ENCODE measurements at regions of chrX and their contacts with region 1.

Region 1: GRCh38 chrX:13087322-13088155 is 43.1 kb upstream of the FAM9C start:
- DNase-seq: peak in 8 of 9 donors; percentile 54 to 94 (median 88)
- ATAC-seq: peak; percentile 77
- H3K4me3 ChIP-seq: peak overlapping the region; percentile 70
- H3K4me3 Mint-ChIP-seq: peak overlapping the region; percentile 72 to 89 (median 82)
- H3K27ac ChIP-seq: peak overlapping the region; percentile 88
- H3K27ac Mint-ChIP-seq: peak overlapping the region; percentile 94 to 99 (median 98)
- H3K4me1 ChIP-seq: peaks cover 79 to 81% of the 10 kb centered on the region in 2 donors
- H3K4me1 Mint-ChIP-seq: peaks cover 15 to 99% (median 86%) of the 10 kb centered on the region in 7 donors
- H3K27me3 ChIP-seq: no peaks in the 10 kb centered on the region
- H3K27me3 Mint-ChIP-seq: no peaks in the 10 kb centered on the region

Region 2: DNA sequence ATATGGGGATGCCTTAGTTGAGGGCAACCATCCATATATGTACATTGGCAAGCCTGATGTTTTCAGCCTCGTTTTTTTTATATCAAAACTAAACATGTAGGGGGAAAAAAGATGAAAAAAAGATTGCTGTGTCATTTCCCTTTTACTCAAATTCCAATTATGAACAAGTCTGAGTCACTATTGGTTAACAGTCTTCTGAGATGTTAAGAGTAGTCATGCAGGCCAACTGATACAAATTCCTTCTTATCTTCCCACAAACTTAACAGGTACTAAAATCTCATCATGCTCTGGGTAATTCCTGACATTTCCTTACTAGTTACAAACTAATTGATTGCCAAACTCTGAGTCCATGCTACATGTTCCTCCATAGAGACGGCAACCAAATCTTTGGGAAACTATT is 727.2 kb before region 1 on chrX:
- CTCF ChIA-PET with region 1: no interaction called
- POLR2A ChIA-PET with region 1: no interaction called
- intact Hi-C with region 1: no loop called
- DNase-seq: no peak
- ATAC-seq: no peak
- H3K4me3 ChIP-seq: no peak overlapping the region
- H3K4me3 Mint-ChIP-seq: no peak overlapping the region
- H3K27ac ChIP-seq: no peak overlapping the region
- H3K27ac Mint-ChIP-seq: no peak overlapping the region
- H3K4me1 ChIP-seq: no peaks in the 10 kb centered on the region
- H3K4me1 Mint-ChIP-seq: no peaks in the 10 kb centered on the region
- H3K27me3 ChIP-seq: no peaks in the 10 kb centered on the region
- H3K27me3 Mint-ChIP-seq: no peaks in the 10 kb centered on the region

Region 3: GRCh38 chrX:12967711-12968465 is 119.7 kb before region 1 on chrX:
- CTCF ChIA-PET with region 1: interaction called, 26 read pairs
- POLR2A ChIA-PET with region 1: interaction called, 1,322 read pairs
- intact Hi-C with region 1: loop called in 1 of 2 experiments (anchors 1 kb)
- DNase-seq: no peak
- ATAC-seq: peak; percentile 48
- H3K4me3 ChIP-seq: peak overlapping the region; percentile 56
- H3K4me3 Mint-ChIP-seq: peak overlapping the region; percentile 74 to 92 (median 82)
- H3K27ac ChIP-seq: peak overlapping the region; percentile 65
- H3K27ac Mint-ChIP-seq: peak overlapping the region; percentile 92 to 99 (median 97)
- H3K4me1 ChIP-seq: peaks cover 32 to 41% of the 10 kb centered on the region in 2 donors
- H3K4me1 Mint-ChIP-seq: peaks cover 19 to 60% (median 45%) of the 10 kb centered on the region in 7 donors
- H3K27me3 ChIP-seq: no peaks in the 10 kb centered on the region
- H3K27me3 Mint-ChIP-seq: no peaks in the 10 kb centered on the region

Region 4: DNA sequence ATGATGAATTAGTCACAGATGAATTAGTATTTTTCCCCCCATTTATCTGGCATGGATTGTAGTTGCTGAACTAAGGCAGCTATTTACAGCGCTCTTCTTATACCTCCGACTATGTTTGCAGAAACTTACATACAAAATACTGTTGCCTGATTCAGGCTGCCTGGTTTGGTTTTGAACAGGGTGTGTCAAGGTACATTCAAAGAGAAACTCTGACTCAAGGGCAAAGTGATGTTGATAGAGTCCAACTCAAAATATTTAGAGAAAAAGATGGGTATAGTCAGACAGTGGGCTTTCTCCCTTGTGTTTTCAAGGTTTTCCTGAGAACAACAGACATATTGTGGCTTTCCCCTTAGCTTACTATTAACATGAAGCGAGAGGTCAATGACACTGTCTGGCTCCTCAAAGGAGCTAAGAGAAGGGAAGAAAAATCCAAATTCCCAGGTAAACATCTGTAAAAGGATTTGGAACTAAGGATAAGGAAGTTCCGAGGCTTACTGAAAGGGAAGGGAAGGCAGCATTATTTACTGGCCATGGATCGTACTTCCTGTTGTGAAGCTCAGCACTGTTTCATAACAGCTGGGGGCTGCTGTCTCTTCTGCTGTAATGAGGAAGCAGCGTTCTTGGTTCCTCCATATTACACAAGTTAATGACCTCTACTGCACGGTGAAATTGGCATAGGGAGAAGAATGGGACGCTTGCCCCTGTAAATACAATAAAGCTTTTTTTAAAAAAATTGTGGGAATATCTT is 74.0 kb before region 1 on chrX:
- CTCF ChIA-PET with region 1: interaction called, 3 read pairs
- POLR2A ChIA-PET with region 1: interaction called, 434 read pairs
- intact Hi-C with region 1: no loop called
- DNase-seq: peak in 5 of 9 donors; percentile 16 to 45 (median 34)
- ATAC-seq: peak; percentile 85
- H3K4me3 ChIP-seq: peak overlapping the region; percentile 31
- H3K4me3 Mint-ChIP-seq: peak overlapping the region; percentile 20 to 75 (median 58)
- H3K27ac ChIP-seq: peak overlapping the region; percentile 65
- H3K27ac Mint-ChIP-seq: peak overlapping the region; percentile 80 to 92 (median 87)
- H3K4me1 ChIP-seq: peaks cover 6 to 44% of the 10 kb centered on the region in 2 donors
- H3K4me1 Mint-ChIP-seq: peaks cover 16 to 80% (median 68%) of the 10 kb centered on the region in 7 donors
- H3K27me3 ChIP-seq: no peaks in the 10 kb centered on the region
- H3K27me3 Mint-ChIP-seq: no peaks in the 10 kb centered on the region

Region 5: GRCh38 chrX:13064599-13065143 is 22.9 kb before region 1 on chrX:
- CTCF ChIA-PET with region 1: interaction called, 3 read pairs
- POLR2A ChIA-PET with region 1: interaction called, 11 read pairs
- intact Hi-C with region 1: no loop called
- DNase-seq: no peak
- ATAC-seq: no peak
- H3K4me3 ChIP-seq: no peak overlapping the region
- H3K4me3 Mint-ChIP-seq: peak overlapping the region in 1 of 10 donors; percentile 27
- H3K27ac ChIP-seq: no peak overlapping the region
- H3K27ac Mint-ChIP-seq: peak overlapping the region in 3 of 9 donors; percentile 53 to 55 (median 54)
- H3K4me1 ChIP-seq: peaks cover 0 to 12% of the 10 kb centered on the region in 2 donors
- H3K4me1 Mint-ChIP-seq: peaks cover 13 to 55% (median 43%) of the 10 kb centered on the region in 7 donors
- H3K27me3 ChIP-seq: no peaks in the 10 kb centered on the region
- H3K27me3 Mint-ChIP-seq: no peaks in the 10 kb centered on the region

Region 6: GRCh38 chrX:13341491-13342101 is 254.1 kb after region 1 on chrX:
- CTCF ChIA-PET with region 1: no interaction called
- POLR2A ChIA-PET with region 1: interaction called, 3 read pairs
- intact Hi-C with region 1: loop called in 1 of 2 experiments (anchors 5 kb)
- DNase-seq: peak in 1 of 9 donors; percentile 8
- ATAC-seq: no peak
- H3K4me3 ChIP-seq: no peak overlapping the region
- H3K4me3 Mint-ChIP-seq: no peak overlapping the region
- H3K27ac ChIP-seq: no peak overlapping the region
- H3K27ac Mint-ChIP-seq: no peak overlapping the region
- H3K4me1 ChIP-seq: no peaks in the 10 kb centered on the region
- H3K4me1 Mint-ChIP-seq: no peaks in the 10 kb centered on the region
- H3K27me3 ChIP-seq: no peaks in the 10 kb centered on the region
- H3K27me3 Mint-ChIP-seq: no peaks in the 10 kb centered on the region

Region 7: GRCh38 chrX:13569479-13570260 is 482.1 kb after region 1 on chrX and contains the start of gene EGFL6:
- CTCF ChIA-PET with region 1: no interaction called
- POLR2A ChIA-PET with region 1: no interaction called
- intact Hi-C with region 1: loop called in 1 of 2 experiments (anchors 10 kb)
- DNase-seq: peak in 1 of 9 donors; percentile 19
- ATAC-seq: no peak
- H3K4me3 ChIP-seq: no peak within 1 kb of the TSS
- H3K4me3 Mint-ChIP-seq: peak within 1 kb of the TSS; percentile 19 to 82 (median 50)
- H3K27ac ChIP-seq: no peak within 1 kb of the TSS
- H3K27ac Mint-ChIP-seq: peak within 1 kb of the TSS in 1 of 9 donors; percentile 52
- H3K4me1 ChIP-seq: no peaks in the 10 kb centered on the region
- H3K4me1 Mint-ChIP-seq: peaks cover 0 to 31% (median 4%) of the 10 kb centered on the region in 7 donors
- H3K27me3 ChIP-seq: no peaks in the 10 kb centered on the region
- H3K27me3 Mint-ChIP-seq: peaks cover 18 to 28% (median 22%) of the 10 kb centered on the region in 5 donors
- total RNA-seq, gene EGFL6: 12.6 TPM in 1 of 5 experiments, not detected in the others